Transverse colon (tissue), 4 donors: ENCODE measurements at regions of chr17 and their contacts with region 1.

Region 1: GRCh38 chr17:80970044-80970761 is 21.4 kb upstream of the CHMP6 start:
- DNase-seq: peak; percentile 50
- H3K4me3 ChIP-seq: no peak overlapping the region
- H3K27ac ChIP-seq: no peak overlapping the region
- H3K4me1 ChIP-seq: peaks cover 0 to 32% (median 14%) of the 10 kb centered on the region in 4 donors
- H3K27me3 ChIP-seq: peaks cover 31% of the 10 kb centered on the region
- CTCF ChIP-seq: peak; percentile 35 to 60 (median 46)
- EP300 ChIP-seq: no peak
- POLR2A ChIP-seq: no peak

Region 2: GRCh38 chr17:80761110-80761871 is 208.9 kb before region 1 on chr17:
- in situ Hi-C with region 1: no loop called
- intact Hi-C with region 1: loop called (anchors 10 kb)
- DNase-seq: no peak
- H3K4me3 ChIP-seq: no peak overlapping the region
- H3K27ac ChIP-seq: peak overlapping the region in 3 of 4 donors; percentile 1 to 27 (median 19)
- H3K4me1 ChIP-seq: peaks cover 6 to 27% (median 11%) of the 10 kb centered on the region in 4 donors
- H3K27me3 ChIP-seq: no peaks in the 10 kb centered on the region
- CTCF ChIP-seq: no peak
- EP300 ChIP-seq: no peak
- POLR2A ChIP-seq: no peak

Region 3: DNA sequence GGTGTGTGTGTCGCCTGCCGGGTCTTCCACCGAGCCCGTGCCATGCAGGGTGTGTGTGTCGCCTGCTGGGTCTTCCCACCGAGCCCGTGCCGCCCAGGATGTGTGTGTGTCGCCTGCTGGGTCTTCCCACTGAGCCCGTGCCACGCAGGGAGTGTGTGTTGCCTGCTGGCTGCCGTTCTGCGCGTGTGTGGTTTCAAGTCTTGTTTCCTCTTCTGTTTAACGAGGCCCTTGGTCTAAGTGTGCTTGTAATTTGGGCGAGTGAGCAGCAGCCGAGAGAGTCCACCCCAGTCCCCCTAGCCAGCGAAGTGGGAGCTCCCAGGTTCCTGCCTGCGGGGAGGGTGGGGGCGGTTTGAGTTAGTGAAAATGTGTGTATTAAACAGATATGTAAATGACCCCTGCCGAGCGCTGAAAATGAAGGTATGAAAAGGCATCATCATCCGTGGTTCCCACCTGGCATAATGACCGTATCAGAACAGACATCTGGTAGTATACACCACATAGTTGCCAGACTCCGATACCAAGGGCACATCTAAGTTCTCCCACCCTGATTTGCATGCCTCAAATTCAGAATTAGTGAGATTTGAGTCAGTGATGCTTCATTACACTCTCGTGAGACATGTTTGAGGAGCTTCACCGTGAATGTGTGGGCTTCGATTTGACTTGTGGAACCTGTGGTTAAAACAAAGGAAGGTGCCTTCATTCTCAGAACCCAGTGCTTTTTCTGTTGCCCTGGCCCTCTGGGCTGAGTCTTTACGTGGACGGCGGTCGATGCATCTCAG is 93.1 kb before region 1 on chr17:
- in situ Hi-C with region 1: no loop called
- intact Hi-C with region 1: no loop called
- DNase-seq: peak; percentile 16
- H3K4me3 ChIP-seq: no peak overlapping the region
- H3K27ac ChIP-seq: no peak overlapping the region
- H3K4me1 ChIP-seq: no peaks in the 10 kb centered on the region
- H3K27me3 ChIP-seq: no peaks in the 10 kb centered on the region
- CTCF ChIP-seq: no peak
- EP300 ChIP-seq: no peak
- POLR2A ChIP-seq: no peak